SK-N-SH (cell line): ENCODE measurements at regions of chr20 and their contacts with region 1.

Region 1: DNA sequence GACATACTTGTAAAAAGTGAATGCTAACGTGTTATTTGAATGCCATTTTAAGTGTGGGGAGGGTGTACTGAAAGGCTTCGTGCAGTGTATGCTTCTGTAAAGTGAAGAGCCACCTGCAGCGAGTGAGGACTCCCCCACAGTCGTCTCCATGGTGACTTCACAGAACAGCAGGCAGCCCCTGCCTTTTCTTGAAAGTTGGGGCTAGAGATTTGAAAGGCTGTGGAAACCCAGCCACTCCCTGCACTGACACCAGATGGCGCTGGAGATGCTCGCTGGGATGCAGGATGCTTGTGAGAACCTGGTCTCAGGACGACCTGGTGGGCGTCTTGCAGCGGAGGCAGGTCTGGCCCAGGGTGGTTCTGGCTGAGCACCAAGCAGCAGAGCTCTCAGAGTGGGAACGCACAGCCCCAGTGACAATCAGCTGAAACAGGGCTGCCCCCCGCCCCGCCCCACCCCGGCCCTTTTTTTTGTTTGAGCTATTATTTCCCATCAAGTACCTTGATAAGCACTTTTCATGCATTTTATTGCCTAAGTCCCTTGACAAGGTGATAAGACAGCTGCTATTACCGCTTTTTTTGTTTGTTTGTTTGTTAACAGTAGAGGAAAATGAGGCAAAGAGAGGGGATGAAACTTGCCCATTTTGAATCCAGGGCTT is 150.3 kb downstream of the SYCP2 start:
- DNase-seq: peak; percentile 82
- H3K4me3 ChIP-seq: no peak overlapping the region; a peak in 1 of 4 replicates
- H3K27ac ChIP-seq: no peak overlapping the region
- H3K4me1 ChIP-seq: no peaks in the 10 kb centered on the region; a peak in 1 of 4 replicates
- H3K27me3 ChIP-seq: no peaks in the 10 kb centered on the region
- CTCF ChIP-seq: peak; percentile 55
- EP300 ChIP-seq: no peak
- RAD21 ChIP-seq: peak; percentile 81

Region 2: DNA sequence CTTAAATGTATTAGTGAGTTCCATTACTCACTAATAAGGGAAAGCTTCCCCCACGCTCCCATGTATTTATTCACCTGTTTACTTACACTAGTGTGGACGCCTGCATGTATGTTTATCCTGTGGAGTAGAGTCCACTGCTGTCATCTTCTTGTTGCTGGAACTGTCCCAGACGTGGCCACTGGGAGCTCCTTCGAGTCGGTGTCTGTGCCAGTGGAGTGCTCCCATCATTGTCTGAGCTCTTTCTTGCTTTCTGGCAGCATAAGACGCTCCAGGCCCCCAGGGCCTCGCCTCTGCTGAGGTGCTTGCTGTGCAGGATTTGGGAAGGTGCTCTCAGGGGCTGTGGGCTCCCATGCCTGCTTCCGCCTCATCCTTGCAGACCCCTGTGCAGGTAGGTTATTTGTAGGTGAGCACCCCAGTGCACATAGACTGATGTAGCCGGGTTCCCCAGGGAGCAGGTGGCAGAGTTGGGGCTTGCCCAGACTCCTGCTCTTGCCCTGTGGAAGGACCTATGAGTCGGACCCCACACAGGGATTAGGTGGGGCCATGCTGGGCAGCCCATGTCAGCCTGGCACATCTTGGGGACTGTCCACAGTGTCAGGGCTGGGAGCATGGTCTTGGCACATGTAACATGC is 162.1 kb before region 1 on chr20:
- CTCF ChIA-PET with region 1: no interaction called
- POLR2A ChIA-PET with region 1: no interaction called
- DNase-seq: no peak
- H3K4me3 ChIP-seq: no peak overlapping the region
- H3K27ac ChIP-seq: no peak overlapping the region
- H3K4me1 ChIP-seq: peaks cover 0 to 6% of the 10 kb centered on the region in 2 experiments; a peak in 1 of 4 replicates
- H3K27me3 ChIP-seq: no peaks in the 10 kb centered on the region
- CTCF ChIP-seq: no peak
- EP300 ChIP-seq: no peak
- RAD21 ChIP-seq: no peak

Region 3: GRCh38 chr20:59718751-59719150 is 64.4 kb before region 1 on chr20:
- CTCF ChIA-PET with region 1: no interaction called
- POLR2A ChIA-PET with region 1: no interaction called
- DNase-seq: no peak
- H3K4me3 ChIP-seq: no peak overlapping the region
- H3K27ac ChIP-seq: no peak overlapping the region
- H3K4me1 ChIP-seq: no peaks in the 10 kb centered on the region; a peak in 1 of 4 replicates
- H3K27me3 ChIP-seq: no peaks in the 10 kb centered on the region
- CTCF ChIP-seq: no peak
- EP300 ChIP-seq: no peak
- RAD21 ChIP-seq: no peak

Region 4: DNA sequence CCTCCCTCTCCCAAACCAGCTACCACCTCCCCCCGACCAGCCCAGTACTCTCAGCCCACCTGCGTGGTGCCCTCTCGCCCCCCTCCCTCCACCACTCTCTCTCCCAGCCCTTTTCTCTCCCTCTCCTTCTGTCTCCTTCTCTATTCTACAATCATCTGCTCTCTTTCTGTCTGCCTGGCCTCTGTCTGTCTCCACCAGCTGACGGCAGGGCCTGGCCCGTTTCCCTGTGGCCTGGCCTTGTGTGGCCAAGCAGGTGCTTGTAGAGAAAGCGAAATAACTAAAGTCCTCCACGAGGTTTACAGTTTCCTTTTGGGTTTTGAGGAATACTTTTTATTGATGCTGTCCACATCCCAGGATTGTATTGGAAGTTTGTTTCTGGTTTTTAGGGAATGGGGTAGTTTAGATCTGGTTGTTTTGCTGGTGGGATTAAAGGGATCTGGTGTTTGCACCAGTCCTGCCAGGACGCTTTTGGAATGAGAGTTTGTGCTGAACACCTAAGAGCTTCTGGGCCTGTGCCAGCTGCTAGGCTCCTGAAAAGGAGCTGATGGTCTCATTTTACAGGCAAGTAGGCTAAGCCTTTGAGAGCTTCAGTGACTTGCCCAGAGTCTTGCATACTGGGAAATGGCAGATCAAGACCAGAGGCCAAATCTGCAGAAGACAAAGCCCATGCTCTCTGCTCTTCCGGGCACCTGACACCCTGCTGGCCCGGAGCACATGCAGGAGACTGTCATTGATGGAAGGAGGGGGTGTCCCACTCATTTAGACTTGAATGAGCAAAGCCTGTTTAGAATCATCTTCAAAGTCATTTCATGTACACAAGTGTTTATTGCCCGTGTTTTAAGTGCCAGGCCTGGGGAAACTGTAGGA is 11.4 kb before region 1 on chr20:
- CTCF ChIA-PET with region 1: interaction called, 26 read pairs
- POLR2A ChIA-PET with region 1: no interaction called
- DNase-seq: no peak
- H3K4me3 ChIP-seq: no peak overlapping the region
- H3K27ac ChIP-seq: no peak overlapping the region
- H3K4me1 ChIP-seq: no peaks in the 10 kb centered on the region
- H3K27me3 ChIP-seq: no peaks in the 10 kb centered on the region
- CTCF ChIP-seq: no peak
- EP300 ChIP-seq: no peak
- RAD21 ChIP-seq: no peak

Region 5: DNA sequence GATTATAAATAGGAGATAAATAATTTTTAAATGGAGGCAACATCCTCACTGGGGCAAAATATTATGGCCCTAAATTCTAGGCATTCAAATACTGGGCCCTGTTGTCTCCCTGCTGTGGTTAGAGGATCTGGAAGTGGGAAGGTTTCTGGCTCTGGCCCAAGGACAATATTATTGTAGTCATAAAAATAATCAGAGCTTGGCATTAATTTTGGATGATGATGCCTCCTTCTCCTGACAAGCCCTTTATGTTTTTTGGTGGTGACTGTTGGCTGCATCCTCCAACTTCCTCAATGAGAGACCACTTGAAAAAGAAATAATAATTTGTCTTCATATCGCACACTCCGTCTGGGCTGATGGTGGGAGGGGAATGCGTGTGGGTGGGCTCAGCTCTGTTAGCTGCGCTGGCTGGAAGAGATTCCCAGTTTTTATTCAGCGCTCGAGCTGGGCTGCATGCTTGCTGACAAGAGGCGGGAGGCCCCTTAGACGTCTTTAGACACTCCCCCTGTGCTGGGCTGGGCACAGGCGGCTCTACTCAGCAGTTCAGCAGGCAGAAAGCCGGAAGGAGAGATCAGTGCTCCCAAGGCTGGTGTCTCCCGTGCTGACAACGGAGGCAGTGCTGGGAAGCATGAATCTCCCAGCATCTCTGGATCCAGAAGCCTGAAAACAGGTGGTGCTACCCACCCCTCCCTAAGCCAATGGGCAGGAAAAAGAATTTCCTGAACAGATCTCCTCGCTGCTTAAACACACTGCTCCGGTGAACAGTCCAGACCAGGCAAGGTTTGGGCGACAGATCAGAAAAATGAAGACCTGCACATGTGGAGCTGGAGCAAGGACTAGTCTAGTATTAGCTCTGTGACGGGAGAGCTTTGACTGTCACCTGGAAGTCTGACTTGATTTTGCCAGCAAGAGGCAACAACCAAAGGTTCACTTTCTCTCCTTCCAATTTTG is 52.6 kb after region 1 on chr20:
- CTCF ChIA-PET with region 1: interaction called, 13 read pairs
- POLR2A ChIA-PET with region 1: no interaction called
- DNase-seq: peak; percentile 72
- H3K4me3 ChIP-seq: peak overlapping the region; percentile 31 to 45; a peak in 3 of 4 replicates
- H3K27ac ChIP-seq: peak overlapping the region in 1 of 2 experiments; percentile 64; a peak in 1 of 4 replicates
- H3K4me1 ChIP-seq: peaks cover 0 to 17% of the 10 kb centered on the region in 2 experiments; a peak in 1 of 4 replicates
- H3K27me3 ChIP-seq: no peaks in the 10 kb centered on the region
- CTCF ChIP-seq: no peak
- EP300 ChIP-seq: no peak
- RAD21 ChIP-seq: no peak

Region 6: GRCh38 chr20:59908855-59909254 is 125.7 kb after region 1 on chr20:
- CTCF ChIA-PET with region 1: no interaction called
- POLR2A ChIA-PET with region 1: no interaction called
- DNase-seq: no peak
- H3K4me3 ChIP-seq: no peak overlapping the region
- H3K27ac ChIP-seq: no peak overlapping the region
- H3K4me1 ChIP-seq: no peaks in the 10 kb centered on the region
- H3K27me3 ChIP-seq: no peaks in the 10 kb centered on the region
- CTCF ChIP-seq: no peak
- EP300 ChIP-seq: no peak
- RAD21 ChIP-seq: no peak

Region 7: GRCh38 chr20:59940174-59940971 is 157.3 kb after region 1 on chr20 and contains the starts of genes FAM217B and PPP1R3D:
- CTCF ChIA-PET with region 1: interaction called, 11 read pairs
- POLR2A ChIA-PET with region 1: no interaction called
- DNase-seq: peak; percentile 96
- H3K4me3 ChIP-seq: peak within 1 kb of the TSS; percentile 77 to 89
- H3K27ac ChIP-seq: peak within 1 kb of the TSS; percentile 78 to 98
- H3K4me1 ChIP-seq: peaks cover 8 to 19% of the 10 kb centered on the region in 2 experiments; a peak in 3 of 4 replicates
- H3K27me3 ChIP-seq: no peaks in the 10 kb centered on the region
- CTCF ChIP-seq: 0 out of 2 replicates have a peak, but pooled peaks have one; percentile 15
- EP300 ChIP-seq: peak; percentile 9 to 31; a peak in 1 of 4 replicates
- RAD21 ChIP-seq: no peak
- polyA plus RNA-seq, gene FAM217B: 3.0 and 4.1 TPM in 2 replicates
- polyA plus RNA-seq, gene PPP1R3D: 0.87 and 0.91 TPM in 2 replicates